A673 (cell line): ENCODE measurements at regions of chr9 and their contacts with region 1.

Region 1: DNA sequence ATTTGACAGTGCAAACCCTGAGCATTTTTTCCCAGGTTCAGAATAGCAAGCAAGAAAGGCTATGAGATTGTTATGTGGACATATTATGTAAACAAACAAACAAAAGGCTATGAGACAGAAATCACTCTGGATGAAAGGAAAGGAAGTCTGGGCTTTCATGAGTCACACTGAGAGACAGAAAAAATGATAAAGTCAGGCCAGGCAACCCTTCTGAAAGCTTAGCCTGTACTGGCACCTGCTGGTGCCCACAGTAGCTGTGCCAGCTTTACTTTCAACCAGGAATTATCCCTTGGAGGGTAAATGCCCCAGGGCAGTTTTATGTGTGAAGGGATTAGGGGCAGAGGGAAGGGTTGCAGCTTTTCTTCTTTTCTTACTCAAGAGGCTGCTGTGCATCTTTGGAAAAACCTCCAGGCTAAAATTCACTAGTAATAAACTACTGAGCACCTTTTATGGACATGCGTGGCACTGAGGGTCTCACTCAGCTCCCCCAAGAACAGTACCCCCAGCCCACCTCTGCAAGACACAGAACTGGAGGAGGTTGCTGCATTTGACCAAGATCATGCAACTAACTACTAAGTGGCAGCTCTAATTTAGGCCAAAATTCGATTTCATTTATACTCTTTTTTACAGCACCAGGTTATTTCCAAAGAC is 41.7 kb downstream of the ACTL7B start:
- DNase-seq: peak; percentile 61
- H3K4me3 ChIP-seq: no peak overlapping the region
- H3K27ac ChIP-seq: no peak overlapping the region
- H3K4me1 ChIP-seq: peaks cover 7% of the 10 kb centered on the region
- H3K27me3 ChIP-seq: no peaks in the 10 kb centered on the region
- CTCF ChIP-seq: peak; percentile 54

Region 2: GRCh38 chr9:108478431-108478837 is 335.6 kb before region 1 on chr9:
- CTCF ChIA-PET with region 1: no interaction called
- POLR2A ChIA-PET with region 1: no interaction called
- intact Hi-C with region 1: loop called (anchors 5 kb)
- DNase-seq: peak; percentile 21
- H3K4me3 ChIP-seq: no peak overlapping the region
- H3K27ac ChIP-seq: no peak overlapping the region
- H3K4me1 ChIP-seq: peaks cover 3% of the 10 kb centered on the region
- H3K27me3 ChIP-seq: no peaks in the 10 kb centered on the region
- CTCF ChIP-seq: no peak

Region 3: GRCh38 chr9:108743901-108744371 is 70.1 kb before region 1 on chr9:
- CTCF ChIA-PET with region 1: no interaction called
- POLR2A ChIA-PET with region 1: no interaction called
- intact Hi-C with region 1: no loop called
- DNase-seq: peak; percentile 8
- H3K4me3 ChIP-seq: no peak overlapping the region
- H3K27ac ChIP-seq: no peak overlapping the region
- H3K4me1 ChIP-seq: no peaks in the 10 kb centered on the region
- H3K27me3 ChIP-seq: no peaks in the 10 kb centered on the region
- CTCF ChIP-seq: no peak